GM12878 (cell line): ENCODE measurements at regions of chr16 and their contacts with region 1.

Region 1: DNA sequence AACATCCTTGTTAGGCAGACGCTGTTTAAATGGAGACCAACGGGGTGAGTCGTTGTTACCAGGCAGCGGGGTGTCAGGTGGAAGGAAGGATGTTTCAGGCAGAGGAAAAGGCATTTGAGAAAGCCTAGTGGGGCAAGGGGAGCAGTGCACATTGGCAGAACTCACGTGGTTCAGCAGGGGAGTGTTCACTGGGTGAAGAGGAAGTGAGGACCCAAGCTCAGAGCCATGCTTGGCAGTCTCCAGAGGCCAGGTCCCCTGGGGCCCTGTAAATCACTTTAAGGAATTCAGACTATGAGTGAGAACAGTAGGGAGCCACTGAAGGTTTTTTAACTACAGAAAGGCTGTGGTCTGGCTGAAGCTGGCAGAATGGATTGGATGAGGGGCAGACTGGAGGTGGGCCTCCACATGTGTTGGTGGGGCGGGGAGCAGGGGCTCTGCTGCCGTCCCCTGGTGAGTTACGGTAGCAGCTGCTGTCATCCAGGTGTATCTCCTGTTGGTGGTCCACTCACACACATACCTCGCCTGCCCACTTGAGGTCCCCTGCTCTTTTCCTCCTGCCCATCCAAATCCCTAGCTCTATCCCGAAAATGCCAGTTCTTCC is 5.1 kb downstream of the CLEC16A start:
- DNase-seq: peak; percentile 91
- ATAC-seq: peak; percentile 83
- H3K4me3 ChIP-seq: peak overlapping the region; percentile 28; the same call in 1 of the 2 replicates
- H3K27ac ChIP-seq: peak overlapping the region; percentile 62
- H3K4me1 ChIP-seq: peaks cover 27% of the 10 kb centered on the region
- H3K27me3 ChIP-seq: no peaks in the 10 kb centered on the region
- CTCF ChIP-seq: peak; percentile 34 to 55 (median 49); a peak in 2 of 6 replicates
- EP300 ChIP-seq: peak; percentile 9 to 33; a peak in 1 of 4 replicates
- POLR2A ChIP-seq: no peak
- RAD21 ChIP-seq: no peak

Region 2: GRCh38 chr16:10937068-10937859 is 12.2 kb before region 1 on chr16:
- CTCF ChIA-PET with region 1: interaction called, 63 read pairs
- POLR2A ChIA-PET with region 1: interaction called, 24 read pairs
- RAD21 ChIA-PET with region 1: interaction called, 50 read pairs
- SMC1A ChIA-PET with region 1: interaction called, 15 read pairs
- in situ Hi-C with region 1: no loop called
- intact Hi-C with region 1: no loop called
- DNase-seq: no peak
- ATAC-seq: peak; percentile 4
- H3K4me3 ChIP-seq: peak overlapping the region; percentile 82; the same call in 1 of the 2 replicates
- H3K27ac ChIP-seq: peak overlapping the region; percentile 23
- H3K4me1 ChIP-seq: peaks cover 42% of the 10 kb centered on the region
- H3K27me3 ChIP-seq: no peaks in the 10 kb centered on the region
- CTCF ChIP-seq: peak in 1 of 3 experiments; percentile 22; a peak in 1 of 6 replicates
- EP300 ChIP-seq: no peak
- POLR2A ChIP-seq: no peak; the same call in 1 of the 2 replicates
- RAD21 ChIP-seq: no peak